HepG2 (cell line): ENCODE measurements at regions of chr17 and their contacts with region 1.

Region 1: GRCh38 chr17:7035591-7036368 is at the start of gene SLC16A13:
- DNase-seq: peak; percentile 97
- ATAC-seq: peak; percentile 81
- H3K4me3 ChIP-seq: peak within 1 kb of the TSS; percentile 75 to 97 (median 94)
- H3K27ac ChIP-seq: peak within 1 kb of the TSS; percentile 90
- H3K4me1 ChIP-seq: peaks cover 41% of the 10 kb centered on the region
- H3K27me3 ChIP-seq: no peaks in the 10 kb centered on the region; a peak in 2 of 5 replicates
- CTCF ChIP-seq: no peak; the same call in 1 of the 2 replicates
- EP300 ChIP-seq: no peak
- POLR2A ChIP-seq: peak; percentile 78 to 93
- RAD21 ChIP-seq: no peak
- total RNA-seq, gene SLC16A13: 1.9 and 3.0 TPM in 2 replicates

Region 2: DNA sequence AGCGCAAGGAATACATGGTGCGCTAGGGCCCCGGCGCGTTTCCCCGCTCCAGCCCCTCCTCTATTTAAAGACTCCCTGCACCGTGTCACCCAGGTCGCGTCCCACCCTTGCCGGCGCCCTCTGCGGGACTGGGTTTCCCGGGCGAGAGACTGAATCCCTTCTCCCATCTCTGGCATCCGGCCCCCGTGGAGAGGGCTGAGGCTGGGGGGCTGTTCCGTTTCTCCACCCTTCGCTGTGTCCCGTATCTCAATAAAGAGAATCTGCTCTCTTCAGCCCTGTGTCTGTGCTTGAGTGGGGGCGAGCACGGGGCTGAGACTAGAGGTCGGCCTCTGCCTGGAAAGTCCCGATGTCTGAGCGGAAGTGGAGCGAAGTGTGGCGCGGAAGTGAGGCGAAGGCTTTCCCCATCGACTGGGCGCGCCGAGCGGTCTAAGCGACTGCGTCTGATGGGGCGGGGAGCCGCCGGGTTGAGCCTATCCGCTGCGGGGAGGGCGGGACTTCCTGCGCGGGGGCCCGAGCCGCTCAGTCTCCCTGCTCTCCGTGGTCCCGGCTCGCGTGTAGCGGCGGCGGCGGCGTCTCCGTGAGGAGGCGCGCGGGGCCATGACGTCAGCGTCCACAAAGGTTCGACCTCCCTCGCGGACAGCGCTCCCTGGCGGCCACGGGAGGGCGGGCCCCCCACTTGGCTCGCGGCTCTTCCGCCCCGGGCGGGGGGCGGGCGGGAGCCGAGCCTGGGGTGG is 21.4 kb before region 1 on chr17:
- CTCF ChIA-PET with region 1: no interaction called
- POLR2A ChIA-PET with region 1: interaction called, 18 read pairs
- in situ Hi-C with region 1: no loop called
- intact Hi-C with region 1: no loop called
- DNase-seq: peak; percentile 90
- ATAC-seq: peak; percentile 91
- H3K4me3 ChIP-seq: peak overlapping the region; percentile 83 to 97 (median 84)
- H3K27ac ChIP-seq: peak overlapping the region; percentile 98
- H3K4me1 ChIP-seq: peaks cover 42% of the 10 kb centered on the region
- H3K27me3 ChIP-seq: no peaks in the 10 kb centered on the region; a peak in 2 of 5 replicates
- CTCF ChIP-seq: peak; percentile 81
- EP300 ChIP-seq: 0 out of 4 replicates have a peak, but pooled peaks of 1 of the 2 experiments have one; percentile 9
- POLR2A ChIP-seq: peak; percentile 85 to 92
- RAD21 ChIP-seq: no peak